BJ (cell line): ENCODE measurements at regions of chr7 and their contacts with region 1.

Region 1: DNA sequence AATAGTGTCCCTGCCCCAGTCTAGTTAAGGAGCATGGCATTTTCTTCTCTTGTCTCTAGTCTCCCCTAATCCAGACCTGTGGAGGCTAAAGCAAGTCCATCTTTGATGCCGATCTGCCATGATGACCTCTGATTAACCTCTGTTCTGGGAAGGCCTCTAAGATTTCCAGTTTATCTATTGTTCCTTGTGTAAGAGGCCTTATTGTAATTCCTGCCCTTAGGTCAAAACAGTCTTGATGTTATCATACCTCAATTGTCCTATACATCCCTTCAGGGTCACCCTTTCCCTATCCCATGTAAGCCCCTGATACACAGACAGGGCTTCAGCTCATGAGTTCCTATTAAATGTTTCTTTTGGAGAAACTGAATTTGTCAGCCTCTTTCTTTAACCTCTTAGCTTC is 4.9 kb upstream of the ZMIZ2 start:
- DNase-seq: no peak
- H3K4me3 ChIP-seq: no peak overlapping the region
- H3K27me3 ChIP-seq: no peaks in the 10 kb centered on the region
- CTCF ChIP-seq: no peak

Region 2: GRCh38 chr7:44608916-44609648 is 134.7 kb before region 1 on chr7:
- CTCF ChIA-PET with region 1: no interaction called
- POLR2A ChIA-PET with region 1: interaction called, 18 read pairs
- DNase-seq: peak; percentile 58
- H3K4me3 ChIP-seq: no peak overlapping the region
- H3K27me3 ChIP-seq: no peaks in the 10 kb centered on the region
- CTCF ChIP-seq: no peak

Region 3: GRCh38 chr7:44633254-44634186 is 110.2 kb before region 1 on chr7:
- CTCF ChIA-PET with region 1: no interaction called
- POLR2A ChIA-PET with region 1: no interaction called
- DNase-seq: peak; percentile 90
- H3K4me3 ChIP-seq: no peak overlapping the region
- H3K27me3 ChIP-seq: no peaks in the 10 kb centered on the region
- CTCF ChIP-seq: no peak